MCF 10A (cell line): ENCODE measurements at regions of chr10 and their contacts with region 1.

Region 1: GRCh38 chr10:128150045-128150493 is 23.8 kb upstream of the MKI67 start:
- DNase-seq: peak; percentile 72
- H3K4me3 Mint-ChIP-seq: peak overlapping the region; percentile 56
- H3K27ac Mint-ChIP-seq: no peak overlapping the region
- H3K4me1 Mint-ChIP-seq: peaks cover 15% of the 10 kb centered on the region
- H3K27me3 Mint-ChIP-seq: peaks cover 6% of the 10 kb centered on the region
- CTCF ChIP-seq: peak; percentile 93

Region 2: DNA sequence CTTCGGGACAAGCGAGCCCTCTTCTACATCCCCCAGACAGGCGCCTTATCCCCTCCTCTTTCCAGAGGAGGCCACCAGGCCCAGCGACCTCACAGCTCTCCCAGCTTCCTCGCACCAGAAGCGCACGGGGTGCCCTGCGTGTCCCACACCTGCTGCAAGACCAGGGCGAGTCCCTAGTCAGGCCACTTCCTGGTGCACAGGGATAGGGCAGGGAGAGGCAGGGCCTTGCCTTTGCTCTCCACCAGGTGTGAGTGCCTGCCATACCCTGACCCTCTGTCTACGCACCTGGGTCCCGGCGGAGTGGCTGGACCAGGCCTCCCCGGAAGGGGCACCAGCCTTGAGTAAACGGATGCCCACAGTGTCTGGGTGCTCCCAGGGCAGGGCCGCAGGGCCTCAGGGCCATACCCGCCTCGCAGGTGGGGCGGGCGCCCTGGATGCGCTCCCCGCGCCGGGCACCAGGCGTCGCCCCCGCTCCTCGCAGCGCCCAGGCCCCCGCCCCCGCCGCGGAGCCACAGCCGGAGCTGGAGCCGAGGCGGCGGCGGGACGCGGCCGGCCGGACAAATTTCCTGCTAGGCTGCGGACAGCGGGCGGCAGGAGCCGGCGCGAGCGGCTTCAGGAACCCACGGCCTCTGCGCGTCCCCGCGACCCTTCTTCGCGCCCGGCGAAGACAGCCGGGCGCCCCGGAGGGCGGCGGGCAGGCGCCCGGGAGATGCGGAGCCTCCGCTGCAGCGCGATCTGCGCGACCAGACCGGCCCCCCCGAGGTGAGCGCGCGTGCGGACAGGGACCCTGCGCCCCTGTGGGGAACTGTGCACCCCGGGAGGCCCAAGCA is 243.3 kb before region 1 on chr10 and contains the start of gene PTPRE:
- CTCF ChIA-PET with region 1: interaction called, 4 read pairs
- POLR2A ChIA-PET with region 1: no interaction called
- intact Hi-C with region 1: loop called (anchors 2 kb)
- DNase-seq: peak; percentile 69
- H3K4me3 Mint-ChIP-seq: peak within 1 kb of the TSS; percentile 62
- H3K27ac Mint-ChIP-seq: no peak within 1 kb of the TSS
- H3K4me1 Mint-ChIP-seq: peaks cover 7% of the 10 kb centered on the region
- H3K27me3 Mint-ChIP-seq: no peaks in the 10 kb centered on the region
- CTCF ChIP-seq: peak; percentile 90
- total RNA-seq, gene PTPRE: 21.8 and 34.6 TPM in 2 replicates

Region 3: GRCh38 chr10:128069351-128070051 is 80.6 kb before region 1 on chr10:
- CTCF ChIA-PET with region 1: interaction called, 187 read pairs
- POLR2A ChIA-PET with region 1: interaction called, 5 read pairs
- intact Hi-C with region 1: no loop called
- DNase-seq: peak; percentile 79
- H3K4me3 Mint-ChIP-seq: no peak overlapping the region
- H3K27ac Mint-ChIP-seq: peak overlapping the region; percentile 70
- H3K4me1 Mint-ChIP-seq: peaks cover 25% of the 10 kb centered on the region
- H3K27me3 Mint-ChIP-seq: no peaks in the 10 kb centered on the region
- CTCF ChIP-seq: peak; percentile 85

Region 4: DNA sequence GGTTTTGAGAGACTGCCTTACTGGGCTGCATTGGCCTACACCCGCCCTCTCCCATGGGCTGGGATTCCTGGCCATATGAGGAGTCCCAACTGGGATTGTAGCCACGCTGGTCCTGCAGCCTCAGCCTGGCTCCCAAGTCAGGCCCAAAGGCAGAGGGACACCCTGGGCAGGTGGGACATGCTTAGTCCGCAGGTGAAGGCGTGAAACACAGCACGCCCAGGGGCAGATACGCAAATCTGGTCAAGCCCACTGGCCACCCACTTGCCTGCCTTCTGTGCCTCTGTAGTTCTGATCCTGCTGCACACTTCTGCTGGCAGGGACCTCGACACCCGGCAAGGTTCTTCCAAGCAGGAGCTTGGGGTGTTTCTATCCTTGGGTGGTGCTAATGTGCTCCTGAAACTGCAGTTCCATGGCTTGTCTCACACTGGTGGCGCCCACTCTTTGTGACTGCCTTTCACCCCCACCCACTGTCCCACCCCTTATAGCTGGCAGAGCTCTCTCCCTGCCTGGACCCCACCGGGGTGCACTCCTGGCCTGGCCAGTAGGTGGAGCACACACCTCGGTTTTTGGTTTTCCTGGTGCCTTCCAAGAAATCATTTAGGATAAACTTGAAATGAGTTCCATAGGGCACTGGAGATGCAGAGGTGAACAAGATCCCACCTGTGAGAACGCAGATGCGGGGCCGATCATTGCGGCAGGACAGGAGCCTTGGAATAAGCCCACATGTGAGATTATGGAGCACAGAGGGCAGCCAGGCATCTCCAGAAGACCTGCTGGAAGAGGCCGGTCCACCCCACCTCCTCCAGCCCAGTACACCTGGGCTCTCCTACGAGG is 71.7 kb before region 1 on chr10:
- CTCF ChIA-PET with region 1: interaction called, 187 read pairs
- POLR2A ChIA-PET with region 1: interaction called, 5 read pairs
- intact Hi-C with region 1: loop called (anchors 1 kb)
- DNase-seq: peak; percentile 50
- H3K4me3 Mint-ChIP-seq: no peak overlapping the region
- H3K27ac Mint-ChIP-seq: no peak overlapping the region
- H3K4me1 Mint-ChIP-seq: no peaks in the 10 kb centered on the region
- H3K27me3 Mint-ChIP-seq: no peaks in the 10 kb centered on the region
- CTCF ChIP-seq: peak; percentile 65

Region 5: DNA sequence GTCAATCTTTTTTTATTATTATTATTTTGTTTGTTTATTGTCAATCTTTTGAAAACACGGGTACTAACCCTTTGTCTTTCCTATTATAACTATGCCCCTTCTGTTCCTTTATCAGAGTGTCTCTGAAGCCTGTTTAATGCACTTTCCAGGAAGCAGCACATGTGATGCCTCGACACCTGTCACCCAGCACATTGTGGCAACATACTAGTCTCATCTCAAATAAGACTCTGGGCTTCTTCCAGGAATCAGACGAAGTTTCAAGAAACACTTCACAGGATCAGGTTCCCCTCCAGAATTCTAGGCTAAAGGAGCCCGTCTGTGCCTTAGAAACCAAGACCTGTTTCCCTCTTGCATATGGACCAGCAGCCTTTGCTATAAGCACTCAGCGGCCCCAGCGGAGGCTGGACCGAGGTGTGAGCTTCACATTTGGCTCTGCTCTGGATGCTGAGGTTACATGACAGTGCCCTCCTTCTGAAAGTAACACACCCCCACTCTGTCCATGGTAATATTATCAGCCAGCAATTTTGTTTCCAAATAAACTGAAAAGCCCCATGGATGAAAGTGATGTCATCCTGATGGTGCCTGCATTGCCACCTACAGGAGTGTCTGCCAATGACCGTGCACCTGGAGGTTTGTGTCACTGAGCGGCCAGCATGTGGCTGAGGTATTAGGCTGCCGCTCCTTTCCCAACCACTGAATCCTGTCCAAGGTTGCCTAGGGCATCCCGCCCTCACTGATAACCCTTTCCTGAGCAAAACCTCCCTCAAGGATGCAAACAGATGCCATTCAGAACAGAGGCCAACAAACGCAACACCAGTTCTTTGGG is 62.0 kb before region 1 on chr10:
- CTCF ChIA-PET with region 1: interaction called, 187 read pairs
- POLR2A ChIA-PET with region 1: interaction called, 5 read pairs
- intact Hi-C with region 1: no loop called
- DNase-seq: peak; percentile 43
- H3K4me3 Mint-ChIP-seq: no peak overlapping the region
- H3K27ac Mint-ChIP-seq: no peak overlapping the region
- H3K4me1 Mint-ChIP-seq: no peaks in the 10 kb centered on the region
- H3K27me3 Mint-ChIP-seq: no peaks in the 10 kb centered on the region
- CTCF ChIP-seq: no peak

Region 6: DNA sequence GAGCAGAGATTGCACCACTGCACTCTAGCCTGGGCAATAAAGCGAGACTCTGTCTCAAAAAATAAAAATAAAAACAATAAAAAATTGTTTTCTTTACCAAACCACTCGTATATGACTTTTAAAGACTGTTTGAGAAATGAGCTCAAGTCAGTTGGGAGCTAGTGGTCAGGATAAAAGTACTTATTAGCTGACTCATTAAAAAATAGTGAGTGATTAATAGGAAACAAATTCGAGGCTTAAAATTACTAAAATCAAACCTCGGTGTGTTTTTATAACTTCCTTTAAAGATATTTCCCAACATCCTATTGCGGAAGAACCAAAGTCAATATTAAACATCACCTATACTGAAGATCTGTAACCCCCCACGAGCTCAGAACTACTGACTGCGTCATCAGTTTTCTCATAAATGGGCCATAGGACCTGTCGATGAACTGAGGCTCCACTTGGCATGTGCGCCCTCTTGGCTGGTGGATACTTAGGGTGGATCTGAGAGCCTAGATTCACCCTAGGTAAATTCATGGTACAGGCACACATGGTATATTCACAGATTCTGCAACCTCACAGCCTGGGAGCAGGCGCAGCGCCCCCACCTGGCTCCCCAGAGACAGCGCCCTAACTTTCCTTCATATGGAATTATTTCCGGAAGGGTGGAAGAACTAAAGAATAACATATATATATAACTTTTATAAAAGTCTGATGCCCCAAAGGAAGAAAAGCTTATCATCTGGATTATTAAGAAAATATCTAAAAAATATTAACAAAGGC is 33.0 kb before region 1 on chr10:
- CTCF ChIA-PET with region 1: interaction called, 13 read pairs
- POLR2A ChIA-PET with region 1: interaction called, 3 read pairs
- intact Hi-C with region 1: no loop called
- DNase-seq: no peak
- H3K4me3 Mint-ChIP-seq: no peak overlapping the region
- H3K27ac Mint-ChIP-seq: no peak overlapping the region
- H3K4me1 Mint-ChIP-seq: peaks cover 13% of the 10 kb centered on the region
- H3K27me3 Mint-ChIP-seq: no peaks in the 10 kb centered on the region
- CTCF ChIP-seq: no peak

Region 7: DNA sequence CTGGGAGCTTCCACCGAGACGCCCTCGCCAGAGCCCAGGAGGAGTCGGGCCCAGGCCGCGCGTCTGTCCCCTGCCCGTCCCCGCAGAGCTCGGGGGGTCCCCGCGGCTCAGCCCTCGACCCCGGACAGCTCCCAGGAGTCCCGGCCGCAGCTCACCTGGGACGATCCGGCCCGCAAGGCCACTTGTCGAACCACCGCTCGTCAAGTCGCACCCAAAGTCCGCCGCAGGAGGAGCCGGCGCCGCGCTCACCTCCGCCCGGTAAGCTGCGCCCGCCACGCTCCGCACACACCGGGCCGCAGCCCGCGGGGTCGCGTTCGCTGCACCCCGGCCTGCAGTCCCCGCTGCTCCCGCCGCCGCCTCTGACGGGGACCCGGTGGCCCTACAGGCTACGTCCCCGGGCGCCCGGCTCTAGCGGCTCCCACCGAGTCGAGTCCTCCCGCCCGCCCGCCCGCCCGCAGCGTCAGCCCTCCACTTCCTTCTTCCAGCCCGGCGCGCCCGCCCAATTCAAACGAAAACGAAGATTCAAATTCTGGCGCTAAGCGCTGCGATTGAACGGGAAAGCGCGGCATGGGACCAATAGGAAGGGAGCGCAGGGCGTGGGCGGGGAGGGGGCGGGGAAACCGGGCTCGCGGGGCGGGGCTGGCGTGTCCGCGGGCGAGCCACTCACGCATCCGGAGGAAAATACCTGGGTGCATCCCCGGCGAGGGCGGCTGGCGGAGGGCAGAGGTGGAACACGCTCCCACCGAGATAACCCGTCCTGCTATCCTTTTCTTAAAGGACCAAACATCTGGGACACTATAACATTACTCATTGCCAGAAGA is 23.9 kb before region 1 on chr10 and contains the start of gene MKI67:
- CTCF ChIA-PET with region 1: interaction called, 19 read pairs
- POLR2A ChIA-PET with region 1: interaction called, 9 read pairs
- intact Hi-C with region 1: loop called (anchors 1 kb)
- DNase-seq: peak; percentile 96
- H3K4me3 Mint-ChIP-seq: peak within 1 kb of the TSS; percentile 76
- H3K27ac Mint-ChIP-seq: peak within 1 kb of the TSS; percentile 87
- H3K4me1 Mint-ChIP-seq: peaks cover 32% of the 10 kb centered on the region
- H3K27me3 Mint-ChIP-seq: no peaks in the 10 kb centered on the region
- CTCF ChIP-seq: no peak
- total RNA-seq, gene MKI67: 40.4 and 81.4 TPM in 2 replicates